Caco-2 (cell line): ENCODE measurements at regions of chr17 and their contacts with region 1.

Region 1: DNA sequence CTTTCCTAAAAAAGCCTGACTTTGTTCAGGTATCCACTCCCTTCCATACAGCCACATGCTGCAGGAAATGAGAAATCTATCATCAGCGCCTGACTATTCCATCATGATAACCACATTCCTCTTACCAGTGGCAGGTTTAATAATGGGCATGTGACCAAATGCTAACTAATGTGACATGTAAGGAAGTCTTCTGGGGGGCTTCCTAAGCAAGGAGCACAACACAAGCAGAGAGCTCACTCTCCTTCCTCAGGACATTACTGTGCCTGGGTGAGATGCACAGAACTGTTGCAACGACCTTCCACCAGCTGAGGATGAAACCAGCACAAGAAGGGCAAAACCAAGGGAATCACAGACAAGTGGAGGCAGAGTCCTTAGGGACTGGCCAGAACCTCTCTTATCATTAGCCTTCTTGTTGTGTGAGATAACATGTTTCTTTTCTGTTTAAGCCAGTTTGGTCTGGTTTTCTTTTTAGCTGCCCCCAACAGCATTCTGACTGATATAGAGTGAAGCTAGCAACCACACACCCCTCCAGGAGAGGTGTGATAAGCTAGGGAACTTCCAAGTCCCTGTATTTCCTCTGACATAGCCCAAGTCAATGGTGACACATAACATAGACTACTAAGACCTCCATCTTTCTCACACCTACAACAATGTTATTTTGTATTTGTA is 16.9 kb downstream of the MYO1D start:
- DNase-seq: no peak
- H3K4me3 ChIP-seq: no peak overlapping the region
- H3K4me3 Mint-ChIP-seq: no peak overlapping the region
- H3K27ac Mint-ChIP-seq: no peak overlapping the region
- H3K4me1 ChIP-seq: peaks cover 76% of the 10 kb centered on the region
- H3K4me1 Mint-ChIP-seq: peaks cover 27% of the 10 kb centered on the region
- H3K27me3 ChIP-seq: no peaks in the 10 kb centered on the region
- H3K27me3 Mint-ChIP-seq: no peaks in the 10 kb centered on the region
- CTCF ChIP-seq: no peak

Region 2: DNA sequence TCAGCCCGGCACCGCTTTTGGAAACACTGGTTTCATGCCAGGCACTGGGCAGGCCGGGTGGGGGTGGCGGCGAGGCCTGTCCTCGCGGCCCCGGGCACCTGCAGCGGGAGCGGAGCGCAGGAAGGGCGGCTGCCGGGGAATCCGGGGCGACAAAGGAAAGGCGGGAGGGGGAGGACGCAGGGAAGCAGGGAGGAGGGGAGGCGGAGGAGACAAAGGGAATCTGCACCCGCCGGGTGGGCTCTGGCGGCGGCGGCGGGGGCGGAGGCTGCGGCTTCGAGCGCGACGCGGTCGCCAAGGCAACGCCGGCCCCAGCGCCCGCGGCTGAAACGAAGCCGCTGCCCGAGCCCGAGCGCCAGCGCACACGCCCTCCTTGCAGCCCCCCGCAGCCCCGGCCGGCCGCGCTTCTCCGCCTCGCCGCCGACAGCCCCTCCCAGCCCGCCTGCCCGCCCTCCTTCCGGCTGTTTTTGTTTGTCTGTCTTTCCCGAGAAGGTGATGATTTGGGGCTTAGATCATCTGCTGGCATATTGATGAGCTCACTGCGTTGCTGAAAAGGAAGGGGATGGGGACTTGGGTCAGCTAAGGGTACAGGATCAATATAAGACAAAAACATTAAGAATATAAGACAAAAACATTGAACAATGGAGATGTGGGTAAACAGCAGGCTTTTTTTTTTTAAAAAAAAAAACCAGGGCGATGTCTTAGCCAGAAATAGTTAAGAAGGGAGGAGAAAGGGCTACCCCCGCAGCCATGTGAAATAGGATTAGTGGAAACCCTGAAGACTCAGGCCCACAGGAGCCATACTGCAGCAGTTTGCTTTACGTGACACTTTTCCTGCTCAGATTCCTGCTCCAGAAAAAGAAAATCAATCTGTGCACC is 340.5 kb before region 1 on chr17:
- CTCF ChIA-PET with region 1: no interaction called
- POLR2A ChIA-PET with region 1: no interaction called
- intact Hi-C with region 1: loop called (anchors 10 kb)
- DNase-seq: no peak
- H3K4me3 ChIP-seq: no peak overlapping the region
- H3K4me3 Mint-ChIP-seq: no peak overlapping the region
- H3K27ac Mint-ChIP-seq: peak overlapping the region; percentile 30
- H3K4me1 ChIP-seq: no peaks in the 10 kb centered on the region
- H3K4me1 Mint-ChIP-seq: no peaks in the 10 kb centered on the region
- H3K27me3 ChIP-seq: no peaks in the 10 kb centered on the region
- H3K27me3 Mint-ChIP-seq: no peaks in the 10 kb centered on the region
- CTCF ChIP-seq: no peak

Region 3: GRCh38 chr17:32870027-32870670 is 10.2 kb after region 1 on chr17:
- CTCF ChIA-PET with region 1: no interaction called
- POLR2A ChIA-PET with region 1: no interaction called
- intact Hi-C with region 1: no loop called
- DNase-seq: no peak
- H3K4me3 ChIP-seq: no peak overlapping the region
- H3K4me3 Mint-ChIP-seq: no peak overlapping the region
- H3K27ac Mint-ChIP-seq: peak overlapping the region; percentile 30
- H3K4me1 ChIP-seq: peaks cover 30% of the 10 kb centered on the region
- H3K4me1 Mint-ChIP-seq: peaks cover 47% of the 10 kb centered on the region
- H3K27me3 ChIP-seq: no peaks in the 10 kb centered on the region
- H3K27me3 Mint-ChIP-seq: no peaks in the 10 kb centered on the region
- CTCF ChIP-seq: no peak